Activated CD8-positive, alpha-beta T cell treated with anti-CD3 and anti-CD28 coated beads, Interleukin-2, amount 10 ng/mL, durations not matched to agents 7 days and 5 days (primary cell): ENCODE measurements at regions of chr3 and their contacts with region 1.

Region 1: GRCh38 chr3:4350789-4351163 is 47.6 kb downstream of the SETMAR start:
- DNase-seq: peak; percentile 75
- ATAC-seq: peak; percentile 92
- H3K4me3 Mint-ChIP-seq: peak overlapping the region; percentile 23
- H3K27ac Mint-ChIP-seq: peak overlapping the region; percentile 4
- H3K4me1 Mint-ChIP-seq: peaks cover 26% of the 10 kb centered on the region
- H3K27me3 Mint-ChIP-seq: no peaks in the 10 kb centered on the region

Region 2: DNA sequence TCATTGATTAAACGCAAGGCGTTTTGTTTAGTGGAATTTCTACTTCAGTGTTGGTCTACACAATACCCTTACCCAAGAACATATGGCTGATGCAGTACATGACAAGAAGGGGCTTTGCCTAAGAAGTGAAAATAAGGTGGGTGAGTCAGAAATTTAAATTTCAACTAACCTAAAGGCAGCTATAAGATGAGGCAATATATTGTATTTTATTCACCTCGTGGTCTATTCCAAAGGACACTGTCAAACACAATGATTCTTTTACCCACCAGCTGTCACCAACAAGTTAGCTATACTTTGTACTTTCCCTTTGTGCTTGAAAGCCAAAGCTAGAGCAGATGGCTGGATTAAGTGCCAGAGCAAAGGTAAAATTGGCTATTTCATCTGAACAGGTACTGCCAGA is 58.5 kb before region 1 on chr3:
- CTCF ChIA-PET with region 1: no interaction called
- POLR2A ChIA-PET with region 1: no interaction called
- DNase-seq: no peak
- ATAC-seq: no peak
- H3K4me3 Mint-ChIP-seq: no peak overlapping the region
- H3K27ac Mint-ChIP-seq: no peak overlapping the region
- H3K4me1 Mint-ChIP-seq: peaks cover 5% of the 10 kb centered on the region
- H3K27me3 Mint-ChIP-seq: peaks cover 13% of the 10 kb centered on the region

Region 3: GRCh38 chr3:4409415-4409814 is 58.6 kb after region 1 on chr3:
- CTCF ChIA-PET with region 1: interaction called, 19 read pairs
- POLR2A ChIA-PET with region 1: no interaction called
- DNase-seq: peak; percentile 53
- ATAC-seq: peak; percentile 50
- H3K4me3 Mint-ChIP-seq: peak overlapping the region; percentile 44
- H3K27ac Mint-ChIP-seq: peak overlapping the region; percentile 78
- H3K4me1 Mint-ChIP-seq: peaks cover 42% of the 10 kb centered on the region
- H3K27me3 Mint-ChIP-seq: no peaks in the 10 kb centered on the region

Region 4: DNA sequence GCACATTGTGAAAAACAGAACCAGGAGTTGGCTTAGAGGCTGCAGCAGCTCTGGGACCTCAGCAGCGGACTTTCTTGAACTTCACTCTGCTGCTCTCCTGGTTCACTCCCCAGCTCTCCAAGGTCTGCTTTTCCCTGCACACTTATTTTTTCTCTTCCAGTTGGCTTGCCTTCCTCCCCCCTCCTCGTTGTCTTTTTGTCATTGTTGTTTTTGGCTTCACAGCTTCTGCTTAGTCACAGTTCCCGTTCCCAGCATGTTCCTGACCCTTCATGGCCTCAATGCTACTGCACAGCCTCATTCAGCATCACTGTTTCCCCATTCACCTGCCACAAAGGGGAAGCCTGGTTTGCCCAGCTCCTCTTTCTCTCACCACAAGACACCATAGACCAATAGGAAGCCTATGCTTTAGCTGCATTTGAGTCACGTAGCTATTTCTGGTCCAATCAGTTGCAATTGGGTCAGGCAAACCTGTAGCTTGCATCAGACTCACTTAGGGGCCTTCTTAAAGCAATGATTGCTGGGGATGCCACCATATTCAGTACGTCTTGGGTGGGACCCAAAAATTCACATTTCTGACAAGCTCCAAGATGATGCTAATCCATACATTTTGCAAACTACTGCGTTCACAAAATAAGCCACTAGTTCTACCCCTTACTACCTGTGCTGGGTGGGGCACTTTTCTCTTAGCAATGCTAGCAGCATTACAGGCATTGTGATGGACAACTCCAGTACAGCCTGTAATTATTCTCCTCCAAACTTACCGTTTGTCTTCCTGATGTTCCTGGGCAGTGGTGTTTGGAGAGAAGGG is 124.1 kb after region 1 on chr3:
- CTCF ChIA-PET with region 1: interaction called, 14 read pairs
- POLR2A ChIA-PET with region 1: no interaction called
- DNase-seq: peak; percentile 40
- ATAC-seq: peak; percentile 75
- H3K4me3 Mint-ChIP-seq: no peak overlapping the region
- H3K27ac Mint-ChIP-seq: peak overlapping the region; percentile 9
- H3K4me1 Mint-ChIP-seq: peaks cover 14% of the 10 kb centered on the region
- H3K27me3 Mint-ChIP-seq: peaks cover 25% of the 10 kb centered on the region

Region 5: GRCh38 chr3:4517643-4518311 is 167.0 kb after region 1 on chr3:
- CTCF ChIA-PET with region 1: interaction called, 44 read pairs
- POLR2A ChIA-PET with region 1: no interaction called
- DNase-seq: no peak
- ATAC-seq: no peak
- H3K4me3 Mint-ChIP-seq: no peak overlapping the region
- H3K27ac Mint-ChIP-seq: peak overlapping the region; percentile 84
- H3K4me1 Mint-ChIP-seq: peaks cover 29% of the 10 kb centered on the region
- H3K27me3 Mint-ChIP-seq: no peaks in the 10 kb centered on the region

Region 6: GRCh38 chr3:4633078-4634004 is 282.6 kb after region 1 on chr3:
- CTCF ChIA-PET with region 1: interaction called, 71 read pairs
- POLR2A ChIA-PET with region 1: no interaction called
- DNase-seq: no peak
- ATAC-seq: peak; percentile 68
- H3K4me3 Mint-ChIP-seq: no peak overlapping the region
- H3K27ac Mint-ChIP-seq: peak overlapping the region; percentile 47
- H3K4me1 Mint-ChIP-seq: peaks cover 9% of the 10 kb centered on the region
- H3K27me3 Mint-ChIP-seq: no peaks in the 10 kb centered on the region